Activated CD8-positive, alpha-beta T cell treated with anti-CD3 and anti-CD28 coated beads, Interleukin-2, amount 10 ng/mL, durations not matched to agents 7 days and 5 days (primary cell): ENCODE measurements at regions of chr9 and their contacts with region 1.

Region 1: GRCh38 chr9:70392189-70392588 is 22.3 kb downstream of the KLF9 start:
- DNase-seq: no peak
- ATAC-seq: no peak
- H3K4me3 Mint-ChIP-seq: no peak overlapping the region
- H3K27ac Mint-ChIP-seq: no peak overlapping the region
- H3K4me1 Mint-ChIP-seq: peaks cover 49% of the 10 kb centered on the region
- H3K27me3 Mint-ChIP-seq: no peaks in the 10 kb centered on the region

Region 2: GRCh38 chr9:70340572-70340971 is 51.6 kb before region 1 on chr9:
- CTCF ChIA-PET with region 1: interaction called, 13 read pairs
- POLR2A ChIA-PET with region 1: no interaction called
- DNase-seq: no peak
- ATAC-seq: no peak
- H3K4me3 Mint-ChIP-seq: no peak overlapping the region
- H3K27ac Mint-ChIP-seq: no peak overlapping the region
- H3K4me1 Mint-ChIP-seq: no peaks in the 10 kb centered on the region
- H3K27me3 Mint-ChIP-seq: no peaks in the 10 kb centered on the region

Region 3: GRCh38 chr9:70406434-70406862 is 14.3 kb after region 1 on chr9:
- CTCF ChIA-PET with region 1: interaction called, 42 read pairs
- POLR2A ChIA-PET with region 1: interaction called, 5 read pairs
- DNase-seq: peak; percentile 60
- ATAC-seq: peak; percentile 31
- H3K4me3 Mint-ChIP-seq: peak overlapping the region; percentile 80
- H3K27ac Mint-ChIP-seq: peak overlapping the region; percentile 94
- H3K4me1 Mint-ChIP-seq: peaks cover 68% of the 10 kb centered on the region
- H3K27me3 Mint-ChIP-seq: no peaks in the 10 kb centered on the region